ENCODE measurements at regions of chr6 and their contacts with region 1.

Region 1: DNA sequence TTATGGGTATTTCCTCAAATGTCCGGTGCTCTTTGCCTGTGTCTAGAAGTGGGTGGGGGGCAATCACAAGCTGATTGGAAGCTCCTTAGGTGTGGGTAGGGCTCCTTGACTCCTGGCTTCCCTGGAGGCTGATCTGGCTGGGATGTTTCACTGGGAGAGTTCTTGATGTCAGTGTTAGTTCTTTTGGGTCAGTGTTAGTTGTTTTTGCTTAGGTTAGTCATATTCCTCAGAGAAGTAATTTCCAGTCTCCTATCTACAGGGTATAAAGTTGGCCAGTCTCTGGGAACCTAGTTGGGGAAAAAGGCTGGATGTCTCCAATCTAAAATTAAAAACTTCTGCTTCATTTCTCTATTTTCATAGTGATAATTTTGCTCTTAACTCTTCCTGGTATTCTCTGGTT is 23.6 kb downstream of the CDC5L start:
- DNase-seq: no peak
- H3K4me3 ChIP-seq: no peak overlapping the region
- H3K27ac ChIP-seq: no peak overlapping the region
- H3K4me1 ChIP-seq: peaks cover 2% of the 10 kb centered on the region
- H3K27me3 ChIP-seq: no peaks in the 10 kb centered on the region
- CTCF ChIP-seq: no peak

Region 2: DNA sequence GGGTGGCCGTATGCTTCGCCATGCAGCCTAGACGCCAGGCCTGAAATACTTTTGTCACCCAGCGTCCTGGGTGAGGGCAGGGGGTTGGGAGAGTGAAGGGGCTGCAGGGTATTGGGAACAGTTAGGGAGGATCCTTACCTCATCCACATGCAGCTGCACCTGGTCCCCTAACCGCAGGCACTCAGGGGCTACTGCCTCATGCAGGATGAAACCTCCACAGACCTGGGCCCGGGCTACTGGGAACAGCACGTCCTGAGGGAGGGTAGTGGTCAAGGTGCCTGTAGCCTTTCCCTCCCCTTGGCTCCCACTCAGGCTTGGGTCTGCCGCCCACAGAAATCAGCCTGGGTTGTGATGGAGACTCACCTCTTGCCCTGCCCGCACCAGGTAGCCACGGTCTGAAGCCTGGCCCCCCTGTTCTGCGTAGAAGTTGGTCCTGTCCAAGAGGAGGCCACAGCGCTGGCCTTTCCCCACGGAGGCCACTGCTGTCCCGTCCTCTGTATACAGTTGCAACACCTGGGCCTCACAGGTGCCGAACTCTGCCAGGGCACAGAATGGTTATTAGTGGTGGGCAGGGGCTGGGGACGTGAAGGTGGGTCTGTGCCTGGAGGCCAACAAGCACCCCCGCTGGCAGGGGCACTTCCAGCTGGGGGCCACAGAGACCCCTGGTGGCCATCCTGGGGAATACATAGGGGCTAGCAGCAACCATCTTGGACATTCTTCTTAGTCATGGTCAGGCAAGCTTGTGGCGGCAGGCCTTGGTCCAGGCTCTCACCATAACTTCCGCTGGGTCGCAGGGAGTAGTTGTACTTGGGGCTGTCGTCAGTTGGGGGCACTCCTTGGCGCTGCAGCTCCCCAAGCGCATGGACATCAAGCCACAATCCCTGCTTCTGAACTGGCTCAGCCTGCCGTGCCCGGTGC is 106.6 kb before region 1 on chr6:
- CTCF ChIA-PET with region 1: no interaction called
- dilution Hi-C with region 1: loop called (anchors 5 kb)
- in situ Hi-C with region 1: no loop called
- intact Hi-C with region 1: no loop called
- DNase-seq: peak; percentile 10
- H3K4me3 ChIP-seq: no peak overlapping the region
- H3K27ac ChIP-seq: no peak overlapping the region
- H3K4me1 ChIP-seq: peaks cover 12% of the 10 kb centered on the region
- H3K27me3 ChIP-seq: no peaks in the 10 kb centered on the region
- CTCF ChIP-seq: peak; percentile 65 to 71